Esophagus squamous epithelium (tissue), 5 donors: ENCODE measurements at regions of chr2 and their contacts with region 1.

Region 1: GRCh38 chr2:65432227-65433190 is at the start of gene SPRED2:
- DNase-seq: peak; percentile 44
- H3K4me3 ChIP-seq: peak within 1 kb of the TSS; percentile 75 to 89 (median 80)
- H3K27ac ChIP-seq: peak within 1 kb of the TSS; percentile 92 to 96 (median 94)
- H3K4me1 ChIP-seq: peaks cover 14 to 67% (median 25%) of the 10 kb centered on the region in 3 donors
- H3K27me3 ChIP-seq: peaks cover 0 to 10% (median 0%) of the 10 kb centered on the region in 4 donors
- CTCF ChIP-seq: peak in 3 of 6 experiments; percentile 2 to 13 (median 10)
- POLR2A ChIP-seq: peak in 2 of 4 donors; percentile 72 to 77
- total RNA-seq, gene SPRED2: 8.1 to 15.1 (median 9.1) TPM

Region 2: DNA sequence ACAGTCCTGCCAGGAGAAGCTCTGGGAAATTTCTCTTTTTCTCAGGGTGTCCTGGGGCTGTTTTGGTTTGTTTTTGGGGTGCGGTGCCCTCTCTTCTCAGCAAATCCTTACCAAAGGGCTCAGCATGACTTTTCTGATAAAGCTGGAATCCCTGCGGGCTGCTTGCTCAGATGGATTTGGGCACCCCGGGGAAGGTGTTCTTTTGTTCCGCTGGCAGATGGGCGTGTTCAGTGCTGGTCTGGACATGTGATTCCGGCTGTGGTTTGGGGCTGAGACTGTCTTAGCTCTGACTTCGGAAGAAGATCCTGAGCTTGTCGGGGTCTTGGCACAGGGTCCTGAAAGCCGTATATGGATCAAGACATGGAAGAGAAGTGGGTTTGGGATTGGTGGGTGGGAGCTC is 134.1 kb after region 1 on chr2:
- intact Hi-C with region 1: loop called (anchors 10 kb)
- DNase-seq: no peak
- H3K4me3 ChIP-seq: peak overlapping the region; percentile 14 to 52 (median 22)
- H3K27ac ChIP-seq: peak overlapping the region; percentile 78 to 88 (median 84)
- H3K4me1 ChIP-seq: peaks cover 8 to 51% (median 12%) of the 10 kb centered on the region in 3 donors
- H3K27me3 ChIP-seq: no peaks in the 10 kb centered on the region
- CTCF ChIP-seq: no peak
- POLR2A ChIP-seq: peak in 1 of 4 donors; percentile 1

Region 3: GRCh38 chr2:65896446-65896845 is 463.9 kb after region 1 on chr2:
- intact Hi-C with region 1: no loop called
- DNase-seq: no peak
- H3K4me3 ChIP-seq: no peak overlapping the region
- H3K27ac ChIP-seq: no peak overlapping the region
- H3K4me1 ChIP-seq: no peaks in the 10 kb centered on the region
- H3K27me3 ChIP-seq: no peaks in the 10 kb centered on the region
- CTCF ChIP-seq: no peak
- POLR2A ChIP-seq: no peak